ENCODE measurements at regions of chr9 and their contacts with region 1.

Region 1: GRCh38 chr9:33721674-33722358 is 73.5 kb upstream of the PRSS3 start:
- ATAC-seq: peak; percentile 84 to 99 (median 96)
- H3K4me3 ChIP-seq: no peak overlapping the region
- H3K27ac ChIP-seq: no peak overlapping the region
- H3K4me1 ChIP-seq: peaks cover 0 to 3% of the 10 kb centered on the region in 2 donors

Region 2: DNA sequence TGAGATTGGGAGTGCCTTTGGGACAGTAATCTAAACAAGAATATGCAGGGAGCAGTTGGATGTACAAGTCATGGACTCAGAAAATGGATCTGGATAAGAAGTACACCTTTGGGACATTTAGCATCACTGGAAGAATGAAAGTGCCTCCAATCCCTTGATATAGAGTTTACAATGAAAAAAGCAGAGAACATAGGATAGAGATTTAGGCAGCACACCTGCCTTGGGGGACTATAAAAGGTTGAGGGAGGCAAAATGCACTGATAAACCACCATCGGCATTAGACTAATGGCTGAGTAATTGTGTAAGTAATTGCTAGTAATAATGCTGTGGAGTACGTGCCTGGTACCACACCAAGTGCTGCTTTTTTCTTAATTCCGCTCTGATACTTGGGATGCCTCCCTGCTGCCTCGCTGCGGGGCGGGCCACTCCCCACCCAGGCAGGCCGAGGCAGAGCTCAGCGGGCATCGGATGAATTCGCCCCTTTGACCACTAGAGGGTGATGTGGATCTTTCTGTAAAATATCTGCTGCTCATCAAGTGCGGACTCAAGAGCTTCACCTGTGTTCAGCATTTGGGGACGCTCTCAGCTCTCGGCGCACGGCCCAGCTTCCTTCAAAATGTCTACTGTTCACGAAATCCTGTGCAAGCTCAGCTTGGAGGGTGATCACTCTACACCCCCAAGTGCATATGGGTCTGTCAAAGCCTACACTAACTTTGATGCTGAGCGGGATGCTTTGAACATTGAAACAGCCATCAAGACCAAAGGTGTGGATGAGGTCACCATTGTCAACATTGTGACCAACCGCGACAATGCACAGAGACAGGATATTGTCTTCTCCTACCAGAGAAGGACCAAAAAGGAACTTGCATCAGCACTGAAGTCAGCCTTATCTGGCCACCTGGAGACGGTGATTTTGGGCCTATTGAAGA is 97.9 kb before region 1 on chr9:
- in situ Hi-C with region 1: loop called in 5 of 9 experiments (anchors 5 to 25 kb)
- ATAC-seq: peak; percentile 74 to 95 (median 92)
- H3K4me3 ChIP-seq: no peak overlapping the region
- H3K27ac ChIP-seq: no peak overlapping the region
- H3K4me1 ChIP-seq: no peaks in the 10 kb centered on the region

Region 3: GRCh38 chr9:33628865-33629410 is 92.9 kb before region 1 on chr9:
- in situ Hi-C with region 1: loop called in 5 of 9 experiments (anchors 5 to 25 kb)
- ATAC-seq: no peak
- H3K4me3 ChIP-seq: no peak overlapping the region
- H3K27ac ChIP-seq: no peak overlapping the region
- H3K4me1 ChIP-seq: no peaks in the 10 kb centered on the region